HEK293 (cell line): ENCODE measurements at regions of chr1 and their contacts with region 1.

Region 1: GRCh38 chr1:109984456-109985275 is at the start of gene AHCYL1:
- H3K4me3 ChIP-seq: peak within 1 kb of the TSS; percentile 81
- H3K27ac ChIP-seq: peak within 1 kb of the TSS; percentile 68
- H3K4me1 ChIP-seq: 0 out of 2 replicates have a peak, but pooled peaks cover 3% of the 10 kb centered on the region
- CTCF ChIP-seq: peak; percentile 99

Region 2: GRCh38 chr1:109548321-109549267 is 436.1 kb before region 1 on chr1 and contains the start of gene GNAI3:
- CTCF ChIA-PET with region 1: interaction called, 28 read pairs
- POLR2A ChIA-PET with region 1: interaction called, 16 read pairs
- H3K4me3 ChIP-seq: peak within 1 kb of the TSS; percentile 57
- H3K27ac ChIP-seq: peak within 1 kb of the TSS; percentile 78
- H3K4me1 ChIP-seq: peaks cover 6% of the 10 kb centered on the region; the same call in 1 of the 2 replicates
- CTCF ChIP-seq: peak; percentile 36; the same call in 1 of the 2 replicates

Region 3: DNA sequence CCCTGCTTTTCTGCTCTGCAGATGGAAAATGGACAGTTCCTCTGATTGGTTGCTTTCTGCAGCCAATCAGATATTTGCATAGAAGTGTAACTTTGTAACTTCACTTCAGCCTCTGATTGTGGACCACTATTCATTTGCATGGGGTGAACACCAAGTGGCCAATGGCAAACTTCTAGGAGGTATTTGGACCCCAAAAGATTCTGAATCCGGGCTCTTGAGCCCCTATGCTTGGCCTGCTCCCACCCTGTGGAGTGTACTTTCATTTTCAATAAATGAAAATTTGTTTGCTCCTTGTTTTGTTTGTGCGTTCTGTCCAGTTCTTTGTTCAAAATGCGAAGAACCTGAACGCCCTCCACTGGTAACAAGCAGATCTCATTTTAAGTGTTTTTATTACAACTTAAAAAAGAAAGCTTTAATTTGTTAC is 335.2 kb before region 1 on chr1:
- CTCF ChIA-PET with region 1: interaction called, 15 read pairs
- POLR2A ChIA-PET with region 1: no interaction called
- H3K4me3 ChIP-seq: no peak overlapping the region
- H3K27ac ChIP-seq: no peak overlapping the region
- H3K4me1 ChIP-seq: no peaks in the 10 kb centered on the region
- CTCF ChIP-seq: no peak

Region 4: GRCh38 chr1:109762821-109763645 is 221.6 kb before region 1 on chr1:
- CTCF ChIA-PET with region 1: no interaction called
- POLR2A ChIA-PET with region 1: no interaction called
- H3K4me3 ChIP-seq: no peak overlapping the region
- H3K27ac ChIP-seq: no peak overlapping the region
- H3K4me1 ChIP-seq: no peaks in the 10 kb centered on the region
- CTCF ChIP-seq: no peak

Region 5: DNA sequence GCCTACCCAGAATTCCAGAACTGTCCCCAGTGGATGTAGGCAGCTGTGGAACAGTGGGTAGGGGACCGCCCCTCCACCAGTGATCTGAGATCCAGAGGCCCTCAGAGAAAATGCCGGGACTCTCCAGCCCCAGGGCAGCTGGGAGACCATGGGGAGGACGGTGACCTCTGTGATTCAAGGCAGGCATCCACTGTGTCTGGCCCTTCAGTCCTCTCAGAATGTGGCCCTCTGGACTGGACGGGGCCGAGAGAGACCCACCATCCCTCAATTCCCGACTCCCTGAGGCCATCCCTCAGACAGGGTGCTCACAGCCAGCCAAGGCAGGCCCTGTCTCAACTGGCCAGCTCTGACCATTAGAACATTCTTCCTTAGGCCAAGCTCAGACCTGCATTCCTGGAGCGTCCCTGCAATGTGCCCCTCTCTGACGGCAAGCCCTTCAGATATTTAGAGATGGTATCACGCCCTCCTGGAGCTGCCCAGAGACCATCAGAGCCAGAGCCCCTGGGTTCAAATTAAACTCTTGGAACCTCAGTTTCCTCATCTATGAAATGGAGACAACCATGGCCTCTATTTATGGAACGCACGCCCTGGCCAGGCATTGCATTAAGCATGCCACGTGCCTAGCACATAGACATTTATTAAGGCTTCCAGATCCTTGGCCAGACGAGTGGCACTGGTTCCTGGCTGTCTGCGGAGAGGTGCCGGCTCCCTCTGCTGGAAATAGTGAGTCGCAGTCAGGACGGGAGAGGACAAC is 211.3 kb before region 1 on chr1:
- CTCF ChIA-PET with region 1: interaction called, 522 read pairs
- POLR2A ChIA-PET with region 1: interaction called, 22 read pairs
- H3K4me3 ChIP-seq: no peak overlapping the region
- H3K27ac ChIP-seq: no peak overlapping the region
- H3K4me1 ChIP-seq: no peaks in the 10 kb centered on the region
- CTCF ChIP-seq: peak; percentile 81; the same call in 1 of the 2 replicates

Region 6: DNA sequence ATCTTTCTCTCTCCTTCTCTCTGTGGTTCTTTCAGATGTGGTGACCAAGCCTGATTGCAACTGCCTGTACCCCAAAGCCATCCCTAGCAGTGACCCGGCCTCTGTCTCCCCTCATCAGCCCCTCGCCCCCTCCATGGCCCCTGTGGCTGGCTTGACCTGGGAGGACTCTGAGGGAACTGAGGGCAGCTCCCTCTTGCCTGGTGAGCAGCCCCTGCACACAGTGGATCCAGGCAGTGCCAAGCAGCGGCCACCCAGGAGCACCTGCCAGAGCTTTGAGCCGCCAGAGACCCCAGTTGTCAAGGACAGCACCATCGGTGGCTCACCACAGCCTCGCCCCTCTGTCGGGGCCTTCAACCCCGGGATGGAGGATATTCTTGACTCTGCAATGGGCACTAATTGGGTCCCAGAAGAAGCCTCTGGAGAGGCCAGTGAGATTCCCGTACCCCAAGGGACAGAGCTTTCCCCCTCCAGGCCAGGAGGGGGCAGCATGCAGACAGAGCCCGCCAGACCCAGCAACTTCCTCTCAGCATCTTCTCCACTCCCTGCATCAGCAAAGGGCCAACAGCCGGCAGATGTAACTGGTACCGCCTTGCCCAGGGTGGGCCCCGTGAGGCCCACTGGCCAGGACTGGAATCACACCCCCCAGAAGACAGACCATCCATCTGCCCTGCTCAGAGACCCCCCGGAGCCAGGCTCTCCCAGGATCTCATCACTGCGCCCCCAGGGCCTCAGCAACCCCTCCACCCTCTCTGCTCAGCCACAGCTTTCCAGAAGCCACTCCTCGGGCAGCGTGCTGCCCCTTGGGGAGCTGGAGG is 61.3 kb before region 1 on chr1:
- CTCF ChIA-PET with region 1: interaction called, 61 read pairs
- POLR2A ChIA-PET with region 1: interaction called, 7 read pairs
- H3K4me3 ChIP-seq: no peak overlapping the region
- H3K27ac ChIP-seq: no peak overlapping the region
- H3K4me1 ChIP-seq: no peaks in the 10 kb centered on the region
- CTCF ChIP-seq: no peak

Region 7: GRCh38 chr1:109959974-109960744 is 24.5 kb before region 1 on chr1:
- CTCF ChIA-PET with region 1: interaction called, 38 read pairs
- POLR2A ChIA-PET with region 1: interaction called, 4 read pairs
- H3K4me3 ChIP-seq: no peak overlapping the region
- H3K27ac ChIP-seq: no peak overlapping the region
- H3K4me1 ChIP-seq: peaks cover 3% of the 10 kb centered on the region; the same call in 1 of the 2 replicates
- CTCF ChIP-seq: no peak

Region 8: DNA sequence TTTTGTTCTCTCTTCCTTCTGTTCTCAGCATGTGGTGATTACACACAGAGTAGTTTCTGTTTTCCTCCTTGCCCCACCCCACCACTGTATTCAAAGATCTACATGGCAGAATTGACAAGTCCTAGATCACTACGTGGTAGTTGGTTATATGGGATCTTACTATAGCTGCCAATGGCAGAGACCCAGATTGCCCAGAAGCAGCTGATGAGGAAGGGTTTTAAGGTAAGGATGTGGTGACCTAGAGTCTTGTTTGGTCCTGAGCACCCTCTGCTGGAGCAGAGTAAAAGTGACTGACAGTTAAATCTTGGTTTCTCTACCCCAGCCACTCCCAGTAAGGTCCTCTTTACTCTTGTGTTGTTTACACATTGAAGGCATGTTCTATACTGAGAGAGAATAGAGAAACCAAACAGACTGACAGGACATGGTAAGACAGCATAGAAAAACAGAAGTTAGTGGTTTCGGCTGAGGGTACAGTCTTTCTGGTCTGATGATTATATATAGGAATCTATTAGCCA is 26.9 kb after region 1 on chr1:
- CTCF ChIA-PET with region 1: interaction called, 48 read pairs
- POLR2A ChIA-PET with region 1: interaction called, 4 read pairs
- H3K4me3 ChIP-seq: no peak overlapping the region
- H3K27ac ChIP-seq: no peak overlapping the region
- H3K4me1 ChIP-seq: peaks cover 7% of the 10 kb centered on the region; the same call in 1 of the 2 replicates
- CTCF ChIP-seq: peak; percentile 42; the same call in 1 of the 2 replicates